ENCODE measurements at regions of chr5 and their contacts with region 1.

Region 1: DNA sequence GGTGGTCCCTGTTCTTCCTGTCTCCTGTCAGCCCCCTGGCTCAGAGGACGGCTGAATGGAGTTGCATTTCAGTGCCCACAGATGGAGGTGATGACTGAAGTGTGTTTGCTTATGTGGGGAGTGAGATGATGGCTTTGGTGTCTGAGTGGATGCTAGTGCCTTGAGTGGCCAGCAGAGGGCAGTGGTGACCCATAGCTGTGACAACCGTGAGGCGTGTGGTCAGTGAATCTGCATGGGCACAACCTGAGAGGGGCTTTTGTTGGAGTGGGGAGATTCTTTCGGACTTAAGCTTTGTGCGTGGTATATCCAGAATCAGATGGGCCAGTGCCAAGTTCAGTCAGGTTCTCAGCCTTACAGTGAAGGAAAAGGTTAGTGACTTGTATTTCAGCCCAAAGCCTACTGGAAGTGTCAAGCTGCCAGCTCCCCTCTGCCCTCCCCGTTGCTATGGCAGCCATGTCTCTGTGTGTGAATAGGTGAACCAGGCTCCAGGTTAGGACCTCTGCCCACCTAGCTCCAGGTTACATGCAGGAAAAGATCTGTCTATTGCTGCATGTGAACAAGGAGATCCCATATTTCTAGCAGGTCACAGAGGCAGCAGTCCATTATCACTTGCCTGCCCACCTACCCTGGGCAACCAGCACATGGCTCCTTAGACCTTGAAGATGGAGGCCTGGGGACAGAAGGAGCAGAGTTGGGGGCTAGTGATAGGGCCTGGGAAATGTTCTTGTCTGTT is 14.7 kb upstream of the CXXC5 start:
- DNase-seq: peak; percentile 48
- H3K4me3 Mint-ChIP-seq: no peak overlapping the region
- H3K27ac Mint-ChIP-seq: peak overlapping the region; percentile 11
- H3K4me1 Mint-ChIP-seq: peaks cover 35% of the 10 kb centered on the region
- H3K27me3 Mint-ChIP-seq: no peaks in the 10 kb centered on the region

Region 2: DNA sequence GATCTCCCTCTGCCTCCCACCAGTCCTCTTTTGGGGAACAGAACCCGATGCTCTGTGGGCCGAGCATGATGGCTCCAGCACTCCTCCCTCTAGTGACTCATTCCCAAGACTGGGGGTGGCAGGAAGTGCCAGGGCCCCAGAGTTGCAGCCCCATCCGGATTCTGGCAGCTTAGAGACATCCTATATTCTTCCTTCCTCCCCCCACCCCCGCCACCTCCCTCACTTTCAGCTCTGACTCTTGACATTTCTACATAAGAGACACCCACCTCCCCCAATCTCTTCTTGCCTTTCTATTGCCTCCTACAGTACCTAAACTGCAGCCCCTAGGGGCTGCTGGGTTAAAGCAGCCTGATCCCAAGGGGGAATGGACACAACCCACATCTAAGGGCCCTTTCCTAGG is 387.1 kb before region 1 on chr5:
- intact Hi-C with region 1: no loop called
- DNase-seq: peak; percentile 8
- H3K4me3 Mint-ChIP-seq: peak overlapping the region; percentile 62
- H3K27ac Mint-ChIP-seq: peak overlapping the region; percentile 83
- H3K4me1 Mint-ChIP-seq: peaks cover 32% of the 10 kb centered on the region
- H3K27me3 Mint-ChIP-seq: peaks cover 3% of the 10 kb centered on the region

Region 3: DNA sequence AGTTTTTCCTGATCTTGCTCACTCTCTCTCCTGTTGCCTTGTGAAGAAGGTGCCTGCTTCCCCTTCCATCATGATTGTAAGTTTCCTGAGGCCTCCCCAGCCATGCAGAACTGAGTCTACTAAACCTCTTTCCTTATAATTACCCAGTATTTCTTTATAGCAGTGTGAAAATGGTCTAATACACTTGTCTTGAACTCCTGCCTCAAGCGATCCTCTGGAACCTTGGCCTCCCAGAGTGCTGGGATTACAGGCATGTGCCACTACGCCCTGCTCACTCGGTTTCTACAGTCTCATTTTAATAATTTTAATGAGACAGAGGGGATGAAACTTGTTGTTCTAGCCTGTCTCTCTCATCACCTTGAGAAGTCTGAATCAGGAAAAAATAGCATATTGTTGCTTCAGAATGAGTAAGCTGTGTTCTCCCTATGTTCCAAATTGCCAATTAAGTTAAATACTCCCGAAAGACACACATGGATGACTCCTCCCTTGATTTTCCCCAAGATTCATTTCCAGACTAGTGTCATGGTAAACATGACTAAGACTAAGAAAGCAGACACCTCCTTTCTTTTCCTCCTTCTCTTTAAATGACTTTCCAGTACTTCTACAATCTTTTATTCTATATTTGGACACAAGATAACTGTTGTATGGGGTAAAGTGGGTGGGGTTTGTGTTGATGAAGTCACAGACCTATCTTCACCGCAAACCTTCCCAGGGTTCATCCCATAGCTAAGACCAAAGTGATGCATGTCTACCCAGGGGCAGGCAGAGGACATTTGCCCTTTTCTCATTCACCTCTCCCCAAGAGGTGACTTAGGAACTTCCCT is 186.3 kb before region 1 on chr5:
- intact Hi-C with region 1: loop called (anchors 2 kb)
- DNase-seq: no peak
- H3K4me3 Mint-ChIP-seq: peak overlapping the region; percentile 46
- H3K27ac Mint-ChIP-seq: peak overlapping the region; percentile 98
- H3K4me1 Mint-ChIP-seq: peaks cover 64% of the 10 kb centered on the region
- H3K27me3 Mint-ChIP-seq: no peaks in the 10 kb centered on the region

Region 4: GRCh38 chr5:139651853-139652787 is 18.7 kb after region 1 on chr5:
- intact Hi-C with region 1: loop called (anchors 1 kb)
- DNase-seq: peak; percentile 50
- H3K4me3 Mint-ChIP-seq: peak overlapping the region; percentile 4
- H3K27ac Mint-ChIP-seq: no peak overlapping the region
- H3K4me1 Mint-ChIP-seq: peaks cover 26% of the 10 kb centered on the region
- H3K27me3 Mint-ChIP-seq: peaks cover 47% of the 10 kb centered on the region

Region 5: DNA sequence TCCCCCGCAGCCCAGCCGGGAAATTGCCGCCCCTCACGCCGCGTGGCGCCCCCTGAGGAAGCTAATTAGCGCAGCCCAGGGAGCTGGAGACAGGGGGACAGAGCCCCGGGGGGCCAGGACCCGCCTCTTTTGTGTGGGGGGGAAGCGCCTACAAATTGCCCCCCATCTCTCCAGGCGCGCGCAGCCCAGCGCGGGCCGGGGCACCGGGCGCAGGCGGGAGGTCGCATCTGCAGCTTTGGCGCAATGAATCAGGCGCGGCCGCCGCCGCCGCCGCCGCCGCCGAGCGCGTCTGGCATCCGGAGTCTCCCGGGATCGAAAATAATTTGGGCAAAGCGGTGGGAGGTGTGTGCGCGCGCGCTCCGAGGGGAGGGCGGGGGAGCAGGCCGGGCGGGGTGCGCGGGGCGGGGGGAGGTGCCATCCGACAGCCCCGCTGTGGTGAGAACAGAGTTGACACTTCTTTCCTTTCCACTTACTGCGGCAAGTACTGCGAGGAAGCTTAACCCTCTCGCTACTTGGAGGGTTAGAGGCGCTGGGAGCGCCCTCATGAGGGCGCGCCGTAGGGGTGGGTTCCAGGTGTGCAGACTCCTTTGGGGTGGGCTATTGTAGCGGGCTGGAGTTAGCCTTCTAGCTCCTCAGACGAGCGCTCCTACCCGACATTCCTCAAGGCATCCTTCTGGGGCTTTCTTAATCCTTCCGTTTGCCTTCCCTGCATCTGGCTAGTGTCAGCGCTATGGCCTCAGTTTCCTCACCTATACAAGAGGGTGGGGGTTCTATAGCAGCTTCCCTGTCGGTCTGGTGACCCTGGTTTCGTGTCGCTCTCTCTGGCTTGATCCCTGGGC is 77.8 kb after region 1 on chr5:
- intact Hi-C with region 1: loop called (anchors 2 kb)
- DNase-seq: peak; percentile 6
- H3K4me3 Mint-ChIP-seq: peak overlapping the region; percentile 54
- H3K27ac Mint-ChIP-seq: no peak overlapping the region
- H3K4me1 Mint-ChIP-seq: peaks cover 5% of the 10 kb centered on the region
- H3K27me3 Mint-ChIP-seq: peaks cover 50% of the 10 kb centered on the region

Region 6: DNA sequence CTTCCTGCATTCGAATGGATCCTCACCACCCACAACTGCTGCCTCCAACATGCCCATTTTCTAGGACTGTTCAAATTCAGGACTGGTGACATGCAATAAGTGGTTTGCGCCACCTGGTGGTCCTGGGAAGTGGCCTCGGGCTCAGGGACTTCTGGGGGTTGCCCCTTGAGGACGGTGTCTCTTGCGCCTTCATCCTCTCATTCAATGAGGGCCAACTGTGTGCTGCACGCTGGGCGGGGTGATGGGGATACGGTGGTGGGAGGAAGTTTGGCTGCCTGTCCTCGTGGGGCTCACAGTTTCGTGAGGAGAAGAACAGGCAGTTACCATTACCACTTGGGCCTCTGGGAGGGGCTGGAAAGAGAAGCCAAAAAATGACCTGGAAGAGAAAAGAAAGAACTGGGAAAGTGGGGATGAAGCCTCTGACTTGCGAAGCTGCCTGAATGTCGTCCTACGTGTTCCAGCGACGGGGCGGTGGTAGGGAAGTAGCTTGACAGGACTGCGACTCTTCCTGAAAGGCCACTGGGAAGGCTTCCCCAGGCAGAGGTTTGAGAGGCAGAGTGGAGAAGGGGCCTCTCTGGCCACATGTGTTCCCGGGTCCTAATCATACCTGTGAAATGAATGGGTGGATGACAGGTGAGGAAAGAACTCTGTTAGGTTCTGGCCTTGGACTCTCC is 211.1 kb after region 1 on chr5:
- intact Hi-C with region 1: loop called (anchors 5 kb)
- DNase-seq: peak; percentile 20
- H3K4me3 Mint-ChIP-seq: no peak overlapping the region
- H3K27ac Mint-ChIP-seq: no peak overlapping the region
- H3K4me1 Mint-ChIP-seq: peaks cover 8% of the 10 kb centered on the region
- H3K27me3 Mint-ChIP-seq: peaks cover 44% of the 10 kb centered on the region

Region 7: GRCh38 chr5:141223112-141223783 is 1589.8 kb after region 1 on chr5 and contains the start of gene PCDHB14:
- intact Hi-C with region 1: no loop called
- DNase-seq: no peak
- H3K4me3 Mint-ChIP-seq: no peak within 1 kb of the TSS
- H3K27ac Mint-ChIP-seq: no peak within 1 kb of the TSS
- H3K4me1 Mint-ChIP-seq: no peaks in the 10 kb centered on the region
- H3K27me3 Mint-ChIP-seq: no peaks in the 10 kb centered on the region
- total RNA-seq, gene PCDHB14: not detected in 2 replicates